ENCODE measurements at regions of chr6 and their contacts with region 1.

Region 1: GRCh38 chr6:20319520-20320357 is 81.9 kb upstream of the E2F3 start:
- DNase-seq: peak; percentile 71
- ATAC-seq: peak; percentile 96
- H3K4me3 Mint-ChIP-seq: peak overlapping the region; percentile 81
- H3K27ac Mint-ChIP-seq: peak overlapping the region; percentile 96
- H3K4me1 Mint-ChIP-seq: peaks cover 15% of the 10 kb centered on the region
- H3K27me3 Mint-ChIP-seq: no peaks in the 10 kb centered on the region
- CTCF ChIP-seq: no peak

Region 2: DNA sequence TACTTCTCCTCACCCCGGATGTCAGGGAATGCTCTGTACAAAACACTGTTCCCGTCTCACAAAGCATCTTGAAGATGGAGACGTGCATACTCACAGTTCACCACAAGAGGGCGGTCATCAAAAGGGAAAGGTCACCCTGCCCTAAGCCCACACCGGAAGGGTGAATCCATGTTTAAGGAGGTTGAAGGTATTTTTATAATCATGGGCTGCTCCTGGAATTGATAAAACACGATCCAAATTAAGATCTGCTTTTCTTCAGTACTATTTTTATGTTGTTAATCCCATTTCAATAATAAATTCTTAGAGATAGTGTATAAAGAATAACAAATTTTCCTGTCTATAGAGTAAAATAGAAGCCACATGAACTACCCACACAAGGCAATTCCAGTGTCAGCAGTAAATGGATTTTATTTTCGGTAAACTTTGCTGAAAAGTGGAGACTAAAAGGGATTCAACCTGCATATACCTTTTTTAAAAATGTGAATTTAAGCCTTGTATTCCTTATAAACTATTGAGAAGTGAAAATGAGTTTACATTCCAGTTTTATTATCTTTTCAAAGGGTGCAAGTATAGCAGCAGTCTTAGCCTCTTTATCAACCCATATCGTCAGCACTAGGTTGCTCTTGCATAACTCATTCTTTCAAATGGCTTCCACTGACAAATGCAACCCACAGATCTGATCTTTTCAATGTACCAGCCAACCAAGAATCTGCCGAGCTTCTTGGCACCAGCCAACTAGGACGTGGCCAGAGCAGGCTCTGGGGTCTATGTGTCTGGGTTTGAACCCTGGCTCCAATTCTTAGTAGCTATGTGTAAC is 27.8 kb before region 1 on chr6:
- CTCF ChIA-PET with region 1: no interaction called
- POLR2A ChIA-PET with region 1: interaction called, 3 read pairs
- intact Hi-C with region 1: loop called (anchors 1 kb)
- DNase-seq: peak; percentile 45
- ATAC-seq: peak; percentile 93
- H3K4me3 Mint-ChIP-seq: peak overlapping the region; percentile 8
- H3K27ac Mint-ChIP-seq: no peak overlapping the region
- H3K4me1 Mint-ChIP-seq: peaks cover 3% of the 10 kb centered on the region
- H3K27me3 Mint-ChIP-seq: peaks cover 2% of the 10 kb centered on the region
- CTCF ChIP-seq: peak; percentile 83

Region 3: GRCh38 chr6:20334962-20335361 is 15.2 kb after region 1 on chr6:
- CTCF ChIA-PET with region 1: no interaction called
- POLR2A ChIA-PET with region 1: no interaction called
- intact Hi-C with region 1: no loop called
- DNase-seq: no peak
- ATAC-seq: no peak
- H3K4me3 Mint-ChIP-seq: no peak overlapping the region
- H3K27ac Mint-ChIP-seq: no peak overlapping the region
- H3K4me1 Mint-ChIP-seq: peaks cover 7% of the 10 kb centered on the region
- H3K27me3 Mint-ChIP-seq: peaks cover 11% of the 10 kb centered on the region
- CTCF ChIP-seq: no peak

Measured in activated B cell treated with CpG ODN at 0.5 μM for 24 hours (primary cell).